Endothelial cell of umbilical vein (primary cell): ENCODE measurements at regions of chr7 and their contacts with region 1.

Region 1: DNA sequence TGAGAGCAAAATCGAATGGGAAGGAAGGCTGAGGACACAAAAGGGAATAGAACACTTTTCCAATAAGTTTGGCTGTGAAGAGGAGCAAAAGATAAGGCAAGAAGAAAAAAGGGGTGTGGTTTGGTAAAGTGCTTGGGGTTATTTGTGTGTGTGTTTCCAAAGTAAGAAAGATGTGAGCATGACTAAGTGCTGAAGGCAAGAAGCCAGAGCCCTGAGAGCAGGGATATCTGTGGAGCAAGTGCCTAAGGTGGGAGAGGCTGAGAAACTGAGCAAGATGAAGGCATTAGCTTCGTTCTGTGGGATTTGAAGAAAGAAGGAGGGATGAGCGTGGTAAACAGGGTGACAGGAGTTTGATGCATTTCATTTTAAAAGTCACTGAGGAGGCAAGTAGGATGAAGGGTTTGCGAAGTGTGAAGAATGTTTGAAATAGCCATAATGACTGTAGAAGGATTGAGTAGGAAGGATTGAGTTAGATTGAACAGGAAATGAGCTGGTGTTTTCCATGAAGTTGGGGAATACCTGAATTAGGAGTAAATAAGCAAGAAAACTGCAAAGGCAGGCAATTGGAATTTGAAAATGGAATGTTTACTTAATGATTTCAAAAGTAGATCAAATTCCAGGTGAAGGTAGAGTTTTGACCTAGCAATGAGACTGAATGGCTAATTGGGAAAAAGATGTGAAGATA is 19.9 kb upstream of the SP4 start:
- DNase-seq: no peak
- H3K4me3 ChIP-seq: no peak overlapping the region
- H3K27ac ChIP-seq: no peak overlapping the region
- H3K4me1 ChIP-seq: no peaks in the 10 kb centered on the region
- H3K27me3 ChIP-seq: peaks cover 0 to 2% of the 10 kb centered on the region in 2 experiments
- CTCF ChIP-seq: no peak
- POLR2A ChIP-seq: no peak

Region 2: DNA sequence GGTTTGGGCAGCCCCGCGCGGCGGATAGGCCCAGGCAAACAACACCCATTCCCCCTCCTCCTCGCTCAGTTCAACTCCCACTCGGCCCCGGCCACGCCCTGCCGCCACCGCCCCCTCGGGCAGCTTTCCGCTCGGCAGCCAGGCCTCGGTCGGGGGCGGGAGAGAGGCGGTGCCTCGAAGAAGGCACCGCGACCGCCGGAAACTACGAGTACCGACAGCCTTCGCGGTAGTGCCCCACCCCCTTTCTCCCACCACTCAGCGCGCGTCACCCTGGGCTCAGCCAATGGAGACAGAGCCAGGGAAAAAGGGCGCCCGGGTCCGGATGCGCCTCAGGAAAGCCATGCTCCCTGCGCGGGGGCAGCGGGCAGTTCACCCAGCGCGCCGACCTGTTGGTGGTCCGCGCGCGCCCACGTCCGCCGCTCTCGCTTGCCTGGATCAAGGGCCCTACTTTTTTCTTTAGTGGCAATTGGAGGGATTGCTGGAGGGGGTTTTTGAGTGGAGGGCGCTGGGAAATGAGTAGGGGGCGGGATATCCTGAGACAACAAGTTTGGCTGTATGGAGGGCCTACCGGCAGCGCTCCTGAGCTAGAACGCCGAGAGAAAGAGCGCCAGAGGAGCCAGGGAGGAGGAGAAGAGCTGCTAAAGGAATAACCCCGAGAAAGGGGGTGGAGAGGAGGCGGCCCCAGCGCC is 19.4 kb after region 1 on chr7:
- CTCF ChIA-PET with region 1: no interaction called
- POLR2A ChIA-PET with region 1: no interaction called
- dilution Hi-C with region 1: no loop called
- intact Hi-C with region 1: no loop called
- DNase-seq: peak; percentile 99
- H3K4me3 ChIP-seq: peak overlapping the region; percentile 54 to 65 (median 55)
- H3K27ac ChIP-seq: peak overlapping the region; percentile 89
- H3K4me1 ChIP-seq: peaks cover 17% of the 10 kb centered on the region
- H3K27me3 ChIP-seq: no peaks in the 10 kb centered on the region
- CTCF ChIP-seq: no peak
- POLR2A ChIP-seq: peak; percentile 59

Region 3: DNA sequence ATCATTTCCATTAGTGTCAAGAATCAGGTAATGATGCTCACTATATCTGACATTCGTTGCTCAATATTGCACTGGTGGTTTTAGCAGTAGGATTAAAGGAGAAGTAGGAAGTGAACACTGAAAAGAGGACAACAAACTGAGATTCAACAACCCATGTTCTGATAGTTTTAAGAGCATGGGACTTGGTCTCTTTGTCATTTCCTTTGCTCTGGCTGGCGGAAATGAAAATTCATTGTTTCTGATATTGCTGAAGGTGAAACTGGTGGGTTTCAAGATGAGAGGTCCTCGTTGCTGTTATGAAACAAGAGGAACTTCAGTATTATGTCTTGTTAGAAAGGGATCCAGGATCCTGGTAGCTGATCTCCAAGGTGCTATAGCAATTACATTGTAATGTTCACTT is 263.9 kb after region 1 on chr7:
- CTCF ChIA-PET with region 1: no interaction called
- POLR2A ChIA-PET with region 1: interaction called, 10 read pairs
- dilution Hi-C with region 1: no loop called
- intact Hi-C with region 1: no loop called
- DNase-seq: no peak
- H3K4me3 ChIP-seq: no peak overlapping the region
- H3K27ac ChIP-seq: no peak overlapping the region
- H3K4me1 ChIP-seq: no peaks in the 10 kb centered on the region
- H3K27me3 ChIP-seq: peaks cover 1 to 2% of the 10 kb centered on the region in 2 experiments
- CTCF ChIP-seq: no peak
- POLR2A ChIP-seq: no peak